GM13976 (cell line): ENCODE measurements at regions of chr14 and their contacts with region 1.

Region 1: GRCh38 chr14:63388763-63389431 is 70.2 kb upstream of the GPHB5 start:
- DNase-seq: peak; percentile 52
- CTCF ChIP-seq: peak; percentile 82

Region 2: GRCh38 chr14:63770187-63770807 is 381.4 kb after region 1 on chr14:
- in situ Hi-C with region 1: loop called (anchors 25 kb)
- DNase-seq: peak; percentile 64
- CTCF ChIP-seq: peak; percentile 58